CD8-positive, alpha-beta memory T cell (primary cell): ENCODE measurements at regions of chr19 and their contacts with region 1.

Region 1: DNA sequence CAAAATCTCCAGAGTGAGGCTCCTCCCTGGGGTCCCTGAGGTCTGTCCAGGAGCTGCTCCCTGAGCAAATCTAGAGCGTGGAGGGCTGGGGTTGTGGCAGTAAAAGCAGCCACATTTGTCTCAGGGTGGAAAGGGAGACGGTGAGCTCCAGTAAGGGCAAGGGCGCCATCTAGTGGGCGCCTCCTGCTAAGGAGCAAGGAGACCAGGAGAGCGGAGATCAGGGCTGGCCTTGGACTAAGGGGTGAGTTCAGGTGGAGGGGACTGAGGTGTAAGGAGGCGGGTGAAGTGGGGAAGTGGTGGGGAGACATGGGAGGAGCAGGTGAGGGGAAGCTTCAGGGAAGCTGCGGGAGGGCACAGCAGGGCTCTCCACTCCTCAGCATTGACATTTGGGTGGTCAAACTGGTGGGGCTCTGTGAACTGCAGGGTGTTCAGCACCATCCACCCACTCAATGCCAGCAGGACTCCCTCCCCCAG is 5.3 kb upstream of the CEACAM21 start:
- DNase-seq: peak; percentile 75 to 87 (median 79)
- H3K4me3 ChIP-seq: no peak overlapping the region
- H3K4me3 Mint-ChIP-seq: peak overlapping the region in 5 of 7 donors; percentile 29 to 61 (median 54)
- H3K27ac ChIP-seq: no peak overlapping the region
- H3K27ac Mint-ChIP-seq: peak overlapping the region in 7 of 8 donors; percentile 29 to 83 (median 64)
- H3K4me1 ChIP-seq: peaks cover 33% of the 10 kb centered on the region
- H3K4me1 Mint-ChIP-seq: peaks cover 47 to 61% (median 56%) of the 10 kb centered on the region in 3 donors
- H3K27me3 ChIP-seq: no peaks in the 10 kb centered on the region
- H3K27me3 Mint-ChIP-seq: no peaks in the 10 kb centered on the region

Region 2: DNA sequence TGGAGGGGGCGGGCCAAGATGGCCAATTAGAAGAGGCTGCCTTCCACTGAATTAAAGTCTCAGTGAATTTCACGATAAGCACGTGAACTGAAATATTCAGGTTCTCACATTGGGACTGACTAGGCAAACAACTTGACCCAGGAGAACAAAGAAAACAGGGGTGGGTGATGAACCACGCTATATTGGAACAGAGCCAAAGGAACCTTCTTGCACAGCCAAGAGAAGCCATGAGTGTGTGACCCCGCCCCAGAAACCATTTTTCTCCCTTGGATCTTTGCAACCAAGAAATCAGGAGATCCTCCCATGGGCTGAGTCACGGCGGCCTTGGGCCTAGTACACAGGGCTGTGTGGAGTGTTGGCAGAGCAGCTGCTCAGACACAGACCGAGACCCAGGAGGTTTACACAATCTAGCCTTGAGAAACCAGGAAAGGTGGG is 90.9 kb before region 1 on chr19:
- CTCF ChIA-PET with region 1: no interaction called
- POLR2A ChIA-PET with region 1: no interaction called
- DNase-seq: no peak
- H3K4me3 ChIP-seq: no peak overlapping the region
- H3K4me3 Mint-ChIP-seq: no peak overlapping the region
- H3K27ac ChIP-seq: no peak overlapping the region
- H3K27ac Mint-ChIP-seq: no peak overlapping the region
- H3K4me1 ChIP-seq: no peaks in the 10 kb centered on the region
- H3K4me1 Mint-ChIP-seq: no peaks in the 10 kb centered on the region
- H3K27me3 ChIP-seq: peaks cover 11% of the 10 kb centered on the region
- H3K27me3 Mint-ChIP-seq: peaks cover 26 to 60% of the 10 kb centered on the region in 2 donors

Region 3: GRCh38 chr19:41531438-41532311 is 39.0 kb before region 1 on chr19:
- CTCF ChIA-PET with region 1: interaction called, 136 read pairs
- POLR2A ChIA-PET with region 1: no interaction called
- DNase-seq: peak; percentile 46 to 92 (median 77)
- H3K4me3 ChIP-seq: peak overlapping the region; percentile 52
- H3K4me3 Mint-ChIP-seq: peak overlapping the region; percentile 62 to 83 (median 73)
- H3K27ac ChIP-seq: no peak overlapping the region
- H3K27ac Mint-ChIP-seq: peak overlapping the region in 7 of 8 donors; percentile 64 to 94 (median 87)
- H3K4me1 ChIP-seq: peaks cover 51% of the 10 kb centered on the region
- H3K4me1 Mint-ChIP-seq: peaks cover 53 to 68% (median 61%) of the 10 kb centered on the region in 3 donors
- H3K27me3 ChIP-seq: no peaks in the 10 kb centered on the region
- H3K27me3 Mint-ChIP-seq: peaks cover 1 to 9% of the 10 kb centered on the region in 2 donors

Region 4: DNA sequence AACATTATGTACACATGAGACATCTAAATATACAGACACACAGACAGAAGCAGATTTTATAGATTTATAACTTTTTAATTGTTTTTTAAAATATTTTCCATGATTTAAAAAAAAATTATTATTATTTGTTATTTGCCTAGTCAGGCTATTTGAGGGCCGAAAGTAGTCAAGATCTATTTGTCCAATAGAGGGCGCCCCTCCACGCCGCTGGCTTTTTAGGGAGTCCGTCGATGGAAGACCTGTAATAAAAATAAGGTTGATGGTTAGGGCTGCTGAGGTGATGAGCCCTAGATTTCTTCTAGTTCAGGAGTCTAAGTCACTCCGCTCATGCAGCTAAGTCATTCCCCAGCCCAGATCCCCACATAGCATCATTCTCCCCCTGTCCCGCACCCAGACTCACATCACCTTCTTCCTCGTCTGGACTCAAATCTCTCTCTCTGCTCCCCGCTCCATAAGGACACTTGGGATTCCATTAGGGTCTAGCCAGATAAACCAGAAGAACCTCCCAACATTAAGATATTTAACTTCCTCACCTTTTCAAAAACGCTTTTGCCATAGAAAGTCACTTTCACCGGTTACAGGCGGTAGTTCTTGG is 28.6 kb before region 1 on chr19:
- CTCF ChIA-PET with region 1: interaction called, 136 read pairs
- POLR2A ChIA-PET with region 1: interaction called, 5 read pairs
- DNase-seq: peak; percentile 61 to 86 (median 69)
- H3K4me3 ChIP-seq: no peak overlapping the region
- H3K4me3 Mint-ChIP-seq: peak overlapping the region in 6 of 7 donors; percentile 15 to 57 (median 53)
- H3K27ac ChIP-seq: no peak overlapping the region
- H3K27ac Mint-ChIP-seq: peak overlapping the region; percentile 9 to 94 (median 37)
- H3K4me1 ChIP-seq: peaks cover 46% of the 10 kb centered on the region
- H3K4me1 Mint-ChIP-seq: peaks cover 42 to 51% (median 49%) of the 10 kb centered on the region in 3 donors
- H3K27me3 ChIP-seq: no peaks in the 10 kb centered on the region
- H3K27me3 Mint-ChIP-seq: no peaks in the 10 kb centered on the region

Region 5: DNA sequence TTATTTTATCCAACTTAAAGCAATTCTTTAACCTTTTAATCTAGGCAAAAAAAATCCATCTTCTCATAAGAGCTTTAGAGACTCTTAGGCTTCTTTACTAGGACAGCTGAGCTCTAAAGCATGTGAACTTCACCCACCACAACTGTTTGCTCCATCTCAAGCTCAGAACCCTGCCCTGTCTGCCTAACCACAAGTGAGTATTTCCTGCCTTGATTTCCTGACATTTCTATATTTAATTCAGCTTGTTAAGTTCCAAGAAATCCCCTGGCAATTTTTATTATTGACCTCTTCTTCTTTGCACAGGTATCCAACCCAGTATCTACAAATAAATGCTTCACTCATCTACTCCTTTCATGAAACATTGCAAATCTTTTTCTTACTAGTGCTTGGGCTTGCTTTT is 15.8 kb before region 1 on chr19:
- CTCF ChIA-PET with region 1: interaction called, 136 read pairs
- POLR2A ChIA-PET with region 1: interaction called, 6 read pairs
- DNase-seq: peak in 4 of 5 donors; percentile 21 to 75 (median 59)
- H3K4me3 ChIP-seq: peak overlapping the region; percentile 44
- H3K4me3 Mint-ChIP-seq: peak overlapping the region; percentile 63 to 100 (median 98)
- H3K27ac ChIP-seq: no peak overlapping the region
- H3K27ac Mint-ChIP-seq: peak overlapping the region; percentile 9 to 96 (median 75)
- H3K4me1 ChIP-seq: peaks cover 64% of the 10 kb centered on the region
- H3K4me1 Mint-ChIP-seq: peaks cover 73 to 82% (median 77%) of the 10 kb centered on the region in 3 donors
- H3K27me3 ChIP-seq: no peaks in the 10 kb centered on the region
- H3K27me3 Mint-ChIP-seq: peaks cover 0 to 1% of the 10 kb centered on the region in 2 donors

Region 6: DNA sequence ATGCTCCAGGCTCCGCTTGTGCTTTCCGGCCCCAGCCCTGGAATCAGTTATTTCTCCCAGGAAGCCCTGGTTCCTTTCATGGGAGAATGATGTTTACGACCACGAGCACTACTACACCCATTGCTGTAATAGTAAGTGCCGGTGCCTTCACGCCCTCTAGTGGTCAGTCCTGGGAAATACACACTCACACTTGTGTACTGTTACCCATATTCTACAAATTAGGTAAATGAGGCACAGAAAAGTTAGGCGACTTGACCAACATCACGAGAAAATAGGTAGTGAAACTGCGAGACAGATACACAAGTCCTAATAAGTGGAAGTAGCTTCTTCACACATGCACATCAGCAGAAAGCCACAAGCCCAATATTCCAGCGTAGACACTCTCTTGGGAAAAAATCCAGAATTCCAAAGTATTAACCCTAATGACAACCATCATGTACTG is 26.9 kb after region 1 on chr19:
- CTCF ChIA-PET with region 1: interaction called, 43 read pairs
- POLR2A ChIA-PET with region 1: no interaction called
- DNase-seq: peak; percentile 47 to 81 (median 64)
- H3K4me3 ChIP-seq: no peak overlapping the region
- H3K4me3 Mint-ChIP-seq: peak overlapping the region in 1 of 7 donors; percentile 36
- H3K27ac ChIP-seq: no peak overlapping the region
- H3K27ac Mint-ChIP-seq: peak overlapping the region in 2 of 8 donors; percentile 27 to 52
- H3K4me1 ChIP-seq: no peaks in the 10 kb centered on the region
- H3K4me1 Mint-ChIP-seq: peaks cover 6 to 13% (median 8%) of the 10 kb centered on the region in 3 donors
- H3K27me3 ChIP-seq: no peaks in the 10 kb centered on the region
- H3K27me3 Mint-ChIP-seq: peaks cover 13 to 62% of the 10 kb centered on the region in 2 donors

Region 7: GRCh38 chr19:41626877-41627276 is 56.2 kb after region 1 on chr19 and contains the start of gene CEACAM4:
- CTCF ChIA-PET with region 1: no interaction called
- POLR2A ChIA-PET with region 1: no interaction called
- DNase-seq: no peak
- H3K4me3 ChIP-seq: no peak within 1 kb of the TSS
- H3K4me3 Mint-ChIP-seq: no peak within 1 kb of the TSS
- H3K27ac ChIP-seq: no peak within 1 kb of the TSS
- H3K27ac Mint-ChIP-seq: no peak within 1 kb of the TSS
- H3K4me1 ChIP-seq: no peaks in the 10 kb centered on the region
- H3K4me1 Mint-ChIP-seq: no peaks in the 10 kb centered on the region
- H3K27me3 ChIP-seq: peaks cover 8% of the 10 kb centered on the region
- H3K27me3 Mint-ChIP-seq: peaks cover 26 to 63% of the 10 kb centered on the region in 2 donors
- total RNA-seq, gene CEACAM4: not detected